GM10248 (cell line): ENCODE measurements at regions of chr15 and their contacts with region 1.

Region 1: GRCh38 chr15:83983634-83984458 is 251.7 kb upstream of the GOLGA6L4 start:
- DNase-seq: peak; percentile 46
- CTCF ChIP-seq: no peak

Region 2: DNA sequence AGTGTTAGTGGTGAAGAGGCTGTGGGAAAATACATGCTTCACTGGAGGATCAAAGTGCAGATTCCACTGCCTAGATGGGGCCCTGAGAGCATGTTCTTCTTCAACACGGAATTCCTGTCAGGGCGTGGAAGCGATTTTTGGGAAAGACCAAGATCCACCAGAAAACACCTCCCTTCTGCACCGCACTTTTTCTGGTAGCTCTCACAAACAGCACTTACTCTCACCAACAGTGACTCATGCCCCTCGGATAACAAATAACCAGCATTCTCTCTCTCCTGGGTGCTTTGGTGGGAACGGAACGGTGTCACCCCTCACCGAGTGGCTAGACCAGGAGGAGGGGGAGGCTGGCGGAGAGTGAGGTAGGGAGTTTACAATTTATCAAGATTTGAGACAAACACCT is 289.8 kb before region 1 on chr15:
- CTCF ChIA-PET with region 1: no interaction called
- POLR2A ChIA-PET with region 1: no interaction called
- DNase-seq: no peak
- CTCF ChIP-seq: no peak

Region 3: GRCh38 chr15:83973816-83974215 is 10.0 kb before region 1 on chr15:
- CTCF ChIA-PET with region 1: interaction called, 21 read pairs
- POLR2A ChIA-PET with region 1: no interaction called
- DNase-seq: peak; percentile 39
- CTCF ChIP-seq: peak; percentile 48